CD4-positive, alpha-beta T cell (primary cell): ENCODE measurements at regions of chr13 and their contacts with region 1.

Region 1: GRCh38 chr13:46288570-46289259 is 77.0 kb downstream of the LRRC63 start:
- DNase-seq: peak in 4 of 14 experiments; percentile 23 to 79 (median 77)
- ATAC-seq: peak; percentile 96
- H3K4me3 ChIP-seq: no peak overlapping the region
- H3K4me3 Mint-ChIP-seq: no peak overlapping the region
- H3K27ac ChIP-seq: no peak overlapping the region
- H3K27ac Mint-ChIP-seq: peak overlapping the region; percentile 11
- H3K4me1 ChIP-seq: peaks cover 5% of the 10 kb centered on the region
- H3K4me1 Mint-ChIP-seq: peaks cover 22% of the 10 kb centered on the region
- H3K27me3 ChIP-seq: no peaks in the 10 kb centered on the region
- H3K27me3 Mint-ChIP-seq: no peaks in the 10 kb centered on the region
- CTCF ChIP-seq: peak; percentile 90

Region 2: DNA sequence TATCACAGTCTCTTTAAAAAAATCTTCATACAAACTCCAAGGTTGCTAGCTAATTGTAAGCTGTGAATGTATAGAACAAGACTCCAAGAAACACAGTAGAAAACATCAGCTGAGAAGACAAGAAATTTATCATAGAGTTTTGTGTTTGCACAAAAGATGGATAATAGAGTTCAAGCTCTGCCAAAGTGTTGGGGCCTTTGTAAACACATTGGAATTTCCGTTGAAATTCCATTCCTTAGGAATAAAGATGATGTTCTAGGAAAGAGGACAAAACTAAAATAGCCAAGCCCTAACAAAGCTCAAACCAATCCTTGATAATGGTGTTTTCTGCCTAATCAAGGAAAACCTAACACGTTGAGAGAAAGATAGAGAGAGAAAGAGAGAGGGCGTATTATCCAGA is 56.4 kb before region 1 on chr13:
- CTCF ChIA-PET with region 1: no interaction called
- POLR2A ChIA-PET with region 1: no interaction called
- intact Hi-C with region 1: loop called in 1 of 2 experiments (anchors 5 kb)
- DNase-seq: no peak
- ATAC-seq: no peak
- H3K4me3 ChIP-seq: no peak overlapping the region
- H3K4me3 Mint-ChIP-seq: no peak overlapping the region
- H3K27ac ChIP-seq: no peak overlapping the region
- H3K27ac Mint-ChIP-seq: no peak overlapping the region
- H3K4me1 ChIP-seq: no peaks in the 10 kb centered on the region
- H3K4me1 Mint-ChIP-seq: no peaks in the 10 kb centered on the region
- H3K27me3 ChIP-seq: no peaks in the 10 kb centered on the region
- H3K27me3 Mint-ChIP-seq: no peaks in the 10 kb centered on the region
- CTCF ChIP-seq: no peak